ENCODE measurements at regions of chr9 and their contacts with region 1.

Region 1: DNA sequence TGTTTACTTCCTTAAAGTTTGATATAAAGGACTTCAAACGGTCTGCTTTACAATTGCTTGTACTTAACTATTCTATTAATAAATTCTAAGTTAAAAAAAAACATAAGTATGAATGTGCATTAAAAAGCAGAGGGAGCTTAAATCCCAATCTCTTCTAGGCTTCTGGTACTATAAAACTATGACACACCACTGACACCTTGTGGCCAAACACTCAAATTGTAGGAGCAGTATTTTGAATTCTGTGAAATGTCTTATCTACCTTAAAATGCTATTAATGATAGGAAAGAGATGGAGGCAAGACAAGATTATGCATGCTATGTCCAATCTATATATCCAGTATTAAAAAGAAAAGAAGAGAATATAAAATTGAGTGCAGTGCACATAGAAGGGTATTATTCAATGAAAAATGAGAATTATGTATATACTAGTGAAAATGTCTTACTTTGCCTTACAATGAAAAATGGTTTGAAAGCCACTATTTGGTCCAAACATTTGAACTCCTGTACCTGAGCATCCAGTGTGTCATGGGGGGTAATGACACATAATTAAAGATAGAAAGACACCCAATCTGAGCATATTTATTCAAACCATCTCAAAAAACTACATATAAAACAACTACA is 87.6 kb downstream of the ERP44 start:
- DNase-seq: peak; percentile 46
- ATAC-seq: no peak
- H3K4me3 Mint-ChIP-seq: no peak overlapping the region
- H3K27ac Mint-ChIP-seq: no peak overlapping the region
- H3K4me1 Mint-ChIP-seq: no peaks in the 10 kb centered on the region
- H3K27me3 Mint-ChIP-seq: no peaks in the 10 kb centered on the region
- CTCF ChIP-seq: peak; percentile 92

Region 2: DNA sequence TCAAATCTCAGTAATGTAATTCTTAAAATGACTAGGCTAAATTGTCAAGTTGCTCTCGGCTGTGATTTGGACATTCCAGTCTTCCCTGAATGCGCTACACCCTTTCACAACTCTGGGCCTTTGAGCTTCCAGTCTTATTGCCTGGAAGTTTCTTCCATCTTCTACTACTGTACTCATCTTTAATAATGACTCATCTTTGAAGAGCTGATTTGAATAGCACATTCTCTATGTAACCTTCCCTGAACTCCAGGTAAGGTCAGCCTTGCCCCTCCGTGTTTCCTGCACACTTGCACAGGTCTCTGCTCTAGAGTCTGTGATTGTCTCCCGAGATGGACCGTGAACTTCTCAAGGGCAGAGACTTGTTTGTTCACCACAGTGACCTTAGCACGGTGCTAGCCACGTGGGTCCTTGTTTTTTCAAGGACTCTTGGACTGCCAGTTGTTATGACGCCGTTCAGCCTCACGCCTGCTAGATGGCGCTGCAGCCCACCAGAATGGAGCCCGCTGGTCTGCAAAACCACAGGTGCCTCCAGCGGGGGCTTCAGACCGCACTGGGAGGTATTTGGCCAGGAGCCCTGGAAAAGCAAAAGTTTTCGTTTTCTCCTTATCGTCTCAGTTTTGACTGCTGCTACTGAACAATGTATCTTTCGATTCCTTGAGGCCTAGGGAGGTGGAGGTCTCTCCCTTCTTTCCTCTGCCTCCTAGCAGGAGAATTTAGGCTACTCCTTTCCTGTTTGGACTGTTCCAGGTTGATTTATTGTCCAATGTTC is 744.7 kb before region 1 on chr9:
- CTCF ChIA-PET with region 1: interaction called, 4 read pairs
- POLR2A ChIA-PET with region 1: no interaction called
- intact Hi-C with region 1: loop called (anchors 10 kb)
- DNase-seq: peak; percentile 86
- ATAC-seq: peak; percentile 90
- H3K4me3 Mint-ChIP-seq: peak overlapping the region; percentile 6
- H3K27ac Mint-ChIP-seq: no peak overlapping the region
- H3K4me1 Mint-ChIP-seq: peaks cover 27% of the 10 kb centered on the region
- H3K27me3 Mint-ChIP-seq: peaks cover 3% of the 10 kb centered on the region
- CTCF ChIP-seq: peak; percentile 97

Region 3: GRCh38 chr9:99807276-99807852 is 203.8 kb before region 1 on chr9:
- CTCF ChIA-PET with region 1: interaction called, 5 read pairs
- POLR2A ChIA-PET with region 1: no interaction called
- intact Hi-C with region 1: loop called (anchors 5 kb)
- DNase-seq: peak; percentile 83
- ATAC-seq: peak; percentile 50
- H3K4me3 Mint-ChIP-seq: no peak overlapping the region
- H3K27ac Mint-ChIP-seq: no peak overlapping the region
- H3K4me1 Mint-ChIP-seq: peaks cover 42% of the 10 kb centered on the region
- H3K27me3 Mint-ChIP-seq: no peaks in the 10 kb centered on the region
- CTCF ChIP-seq: peak; percentile 91

Region 4: GRCh38 chr9:99936947-99937587 is 74.1 kb before region 1 on chr9:
- CTCF ChIA-PET with region 1: no interaction called
- POLR2A ChIA-PET with region 1: no interaction called
- intact Hi-C with region 1: no loop called
- DNase-seq: no peak
- ATAC-seq: no peak
- H3K4me3 Mint-ChIP-seq: no peak overlapping the region
- H3K27ac Mint-ChIP-seq: no peak overlapping the region
- H3K4me1 Mint-ChIP-seq: peaks cover 12% of the 10 kb centered on the region
- H3K27me3 Mint-ChIP-seq: no peaks in the 10 kb centered on the region
- CTCF ChIP-seq: no peak

Region 5: DNA sequence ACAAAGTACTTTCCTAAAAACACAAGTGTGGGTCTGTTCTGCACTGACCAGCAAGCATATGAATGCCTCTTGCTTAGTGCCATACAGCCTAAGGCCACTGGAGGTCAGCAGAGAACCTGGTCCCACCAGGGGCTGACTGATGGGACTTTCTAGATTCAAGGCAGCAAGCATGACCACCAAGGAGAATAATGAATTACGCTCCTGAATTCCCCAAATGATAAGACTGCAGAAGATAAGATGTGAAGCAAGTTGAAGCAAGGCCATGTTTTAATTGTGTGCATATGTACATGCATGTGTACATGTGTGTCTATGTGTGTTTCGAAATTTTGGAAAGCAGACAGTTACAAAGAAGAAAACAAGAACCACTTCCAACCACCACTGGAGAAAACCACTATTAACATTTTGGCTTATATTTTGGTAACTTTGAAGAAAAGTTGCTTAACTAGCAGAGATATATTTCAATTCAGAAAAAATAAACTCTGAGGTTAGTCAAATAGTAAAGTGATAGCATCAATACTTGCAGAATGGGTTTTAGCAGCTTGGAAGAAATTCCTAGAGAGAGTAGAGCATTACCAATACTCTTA is 17.1 kb after region 1 on chr9:
- CTCF ChIA-PET with region 1: interaction called, 13 read pairs
- POLR2A ChIA-PET with region 1: no interaction called
- intact Hi-C with region 1: no loop called
- DNase-seq: peak; percentile 84
- ATAC-seq: peak; percentile 100
- H3K4me3 Mint-ChIP-seq: no peak overlapping the region
- H3K27ac Mint-ChIP-seq: no peak overlapping the region
- H3K4me1 Mint-ChIP-seq: peaks cover 9% of the 10 kb centered on the region
- H3K27me3 Mint-ChIP-seq: no peaks in the 10 kb centered on the region
- CTCF ChIP-seq: peak; percentile 89

Measured in activated CD8-positive, alpha-beta T cell treated with anti-CD3 and anti-CD28 coated beads for 36 hours (primary cell).